Right cardiac atrium (tissue), 5 donors: ENCODE measurements at regions of chr19 and their contacts with region 1.

Region 1: GRCh38 chr19:13022859-13023636 is 27.8 kb downstream of the NFIX start:
- DNase-seq: peak; percentile 88 to 94 (median 94)
- ATAC-seq: peak; percentile 82 to 88
- H3K4me3 ChIP-seq: peak overlapping the region; percentile 27
- H3K27ac ChIP-seq: peak overlapping the region; percentile 91
- H3K4me1 ChIP-seq: peaks cover 17% of the 10 kb centered on the region
- H3K27me3 ChIP-seq: no peaks in the 10 kb centered on the region

Region 2: GRCh38 chr19:12983542-12984142 is 39.4 kb before region 1 on chr19:
- intact Hi-C with region 1: no loop called
- DNase-seq: peak; percentile 81 to 94 (median 93)
- ATAC-seq: peak; percentile 77 to 80
- H3K4me3 ChIP-seq: no peak overlapping the region
- H3K27ac ChIP-seq: no peak overlapping the region
- H3K4me1 ChIP-seq: peaks cover 3% of the 10 kb centered on the region
- H3K27me3 ChIP-seq: no peaks in the 10 kb centered on the region

Region 3: DNA sequence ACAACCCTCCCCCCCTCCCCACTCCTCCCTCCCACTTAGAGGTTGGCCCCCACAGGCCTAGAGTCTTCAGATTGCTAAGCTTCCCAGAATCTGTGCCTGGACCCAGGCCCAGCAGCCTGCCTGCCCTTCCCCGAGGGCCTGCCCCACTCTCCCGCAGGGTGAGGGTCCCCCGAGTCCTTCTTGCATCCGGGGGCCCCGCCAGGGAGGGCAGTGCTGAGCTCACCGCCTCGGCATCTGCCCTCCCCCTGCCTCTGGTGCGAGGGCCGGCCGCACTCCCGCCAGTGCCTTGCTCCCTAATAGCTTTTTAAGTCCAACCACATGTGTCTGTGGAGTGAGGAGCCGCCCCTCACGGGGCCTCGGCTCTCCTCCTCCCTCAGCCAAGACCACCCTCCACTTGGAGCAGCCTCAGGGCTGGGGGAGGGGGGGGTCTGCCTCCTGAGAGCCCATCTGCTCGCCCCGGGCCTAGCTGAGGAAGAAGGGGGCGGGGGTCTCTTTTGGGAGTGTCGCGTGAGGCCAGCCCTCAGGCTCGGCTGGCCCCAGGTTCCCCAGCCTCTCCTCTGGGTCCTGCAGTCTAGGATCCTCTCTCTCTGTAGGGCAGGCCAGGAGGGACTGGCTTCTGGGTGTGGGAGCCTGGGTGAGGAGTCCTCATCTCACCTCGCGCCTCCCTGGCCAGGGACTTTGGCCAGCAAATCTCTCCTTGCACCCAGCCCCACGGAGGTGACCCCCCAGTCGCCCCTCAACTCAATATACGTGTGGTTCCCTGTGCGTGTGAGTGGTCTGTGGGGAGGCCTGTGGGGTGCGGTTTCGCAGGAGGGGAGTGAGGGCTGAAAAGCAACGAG is 32.4 kb after region 1 on chr19:
- intact Hi-C with region 1: loop called in 2 of 4 experiments (anchors 5 kb)
- DNase-seq: peak; percentile 91 to 96 (median 95)
- ATAC-seq: peak; percentile 66 to 69
- H3K4me3 ChIP-seq: no peak overlapping the region
- H3K27ac ChIP-seq: peak overlapping the region; percentile 97
- H3K4me1 ChIP-seq: peaks cover 72% of the 10 kb centered on the region
- H3K27me3 ChIP-seq: no peaks in the 10 kb centered on the region